ENCODE measurements at regions of chr1 and their contacts with region 1.

Region 1: GRCh38 chr1:172167796-172168596 is 252.5 kb upstream of the C1orf105 start:
- DNase-seq: no peak
- ATAC-seq: peak; percentile 71

Region 2: DNA sequence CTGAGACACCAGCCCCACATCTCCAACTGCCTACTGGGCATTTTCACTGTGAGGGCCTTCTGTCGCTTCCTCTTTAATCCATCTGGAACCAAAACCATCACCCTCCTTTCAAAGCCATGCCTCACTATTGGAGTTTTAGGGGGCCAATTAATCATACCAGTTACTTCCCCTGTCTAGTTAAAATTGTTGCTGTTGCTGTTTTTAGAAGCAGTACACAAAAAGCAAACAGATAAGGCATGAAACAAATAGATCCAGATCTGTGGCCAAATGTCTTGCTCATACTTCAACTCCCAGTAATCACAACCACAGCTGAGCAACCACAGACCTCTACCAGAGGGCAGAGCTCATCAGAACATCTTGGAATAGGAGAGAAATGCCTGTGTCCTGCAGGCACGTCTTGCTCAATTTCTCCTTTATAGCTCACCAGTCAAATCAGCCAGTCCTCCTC is 118.7 kb after region 1 on chr1:
- intact Hi-C with region 1: loop called (anchors 10 kb)
- DNase-seq: no peak
- ATAC-seq: peak; percentile 87

Region 3: DNA sequence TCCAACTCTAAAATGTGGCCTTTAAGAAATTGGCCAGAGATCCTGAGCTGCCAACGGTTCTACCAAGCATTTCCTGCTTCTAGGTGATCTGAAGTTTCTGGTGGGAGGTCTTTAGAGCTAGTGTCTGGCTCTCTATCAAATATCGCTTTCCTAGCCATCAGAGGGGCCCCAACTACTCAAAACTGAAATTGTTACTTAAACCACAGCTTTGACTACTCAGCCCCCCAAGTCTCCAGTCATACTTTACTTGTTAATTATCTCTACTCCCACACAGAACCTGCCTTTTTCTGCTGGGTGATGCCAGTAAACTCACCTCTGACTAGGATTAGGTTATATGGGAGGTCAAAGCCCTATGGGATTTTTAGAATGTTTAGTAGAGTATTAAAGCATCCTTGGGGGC is 586.0 kb after region 1 on chr1:
- intact Hi-C with region 1: no loop called
- DNase-seq: no peak
- ATAC-seq: no peak